Heart right ventricle (tissue), 16 donors: ENCODE measurements at regions of chr4 and their contacts with region 1.

Region 1: DNA sequence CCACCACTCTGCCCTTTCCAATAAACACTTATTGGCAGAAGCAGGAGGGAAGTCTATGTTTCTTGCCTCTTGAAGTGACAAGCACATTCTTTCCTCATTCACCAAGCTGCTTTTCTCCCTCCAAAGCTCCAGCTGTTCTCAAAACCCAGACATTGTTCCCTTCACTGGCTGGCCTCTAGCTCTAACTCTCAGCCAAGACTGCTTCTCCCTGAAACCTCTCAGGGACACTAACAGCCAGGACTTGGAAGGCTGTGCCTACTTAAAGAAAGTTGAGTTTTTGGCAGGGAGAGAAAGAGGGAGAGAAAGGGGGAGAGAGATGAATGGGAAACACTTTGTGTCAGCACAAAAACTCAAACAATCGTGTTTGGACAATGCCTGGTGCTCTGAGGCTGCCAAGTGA is 99.5 kb downstream of the COX18 start:
- DNase-seq: peak in 1 of 2 donors; percentile 7
- ATAC-seq: peak in 6 of 8 donors; percentile 27 to 89 (median 80)
- H3K4me3 ChIP-seq: no peak overlapping the region
- H3K27ac ChIP-seq: peak overlapping the region in 3 of 10 donors; percentile 21 to 59 (median 47)
- H3K4me1 ChIP-seq: no peaks in the 10 kb centered on the region
- H3K27me3 ChIP-seq: no peaks in the 10 kb centered on the region
- CTCF ChIP-seq: no peak

Region 2: DNA sequence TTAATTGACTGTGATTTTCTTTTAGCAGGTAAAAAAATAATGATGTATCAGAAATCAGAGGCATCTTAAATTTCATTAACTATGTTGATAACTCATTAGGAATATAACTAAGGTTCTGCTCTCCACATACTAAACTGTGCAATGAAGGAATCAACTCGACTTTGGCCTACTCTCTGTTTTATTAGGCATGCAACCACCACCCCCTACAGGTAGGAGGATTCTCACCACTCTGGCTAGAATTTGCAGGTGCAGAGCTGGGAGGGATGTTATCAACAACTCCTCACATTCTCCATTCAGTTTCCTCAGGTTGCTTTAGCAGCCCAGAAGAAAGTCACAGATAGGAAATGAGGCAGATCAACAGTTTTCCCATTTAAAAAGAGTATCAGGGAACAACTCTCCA is 60.5 kb before region 1 on chr4:
- intact Hi-C with region 1: loop called in 1 of 10 experiments (anchors 10 kb)
- DNase-seq: no peak
- ATAC-seq: no peak
- H3K4me3 ChIP-seq: no peak overlapping the region
- H3K27ac ChIP-seq: no peak overlapping the region
- H3K4me1 ChIP-seq: no peaks in the 10 kb centered on the region
- H3K27me3 ChIP-seq: no peaks in the 10 kb centered on the region
- CTCF ChIP-seq: peak in 4 of 9 donors; percentile 33 to 48 (median 36)